CD8-positive, alpha-beta memory T cell (primary cell): ENCODE measurements at regions of chr16 and their contacts with region 1.

Region 1: GRCh38 chr16:22206013-22206841 is at the start of gene EEF2K:
- DNase-seq: peak; percentile 70 to 85 (median 73)
- H3K4me3 ChIP-seq: peak within 1 kb of the TSS; percentile 65
- H3K4me3 Mint-ChIP-seq: peak within 1 kb of the TSS; percentile 86 to 97 (median 94)
- H3K27ac ChIP-seq: peak within 1 kb of the TSS; percentile 63
- H3K27ac Mint-ChIP-seq: peak within 1 kb of the TSS; percentile 40 to 91 (median 84)
- H3K4me1 ChIP-seq: peaks cover 19% of the 10 kb centered on the region
- H3K4me1 Mint-ChIP-seq: peaks cover 24 to 40% (median 32%) of the 10 kb centered on the region in 3 donors
- H3K27me3 ChIP-seq: no peaks in the 10 kb centered on the region
- H3K27me3 Mint-ChIP-seq: no peaks in the 10 kb centered on the region
- total RNA-seq, gene EEF2K: 27.2 to 28.3 TPM

Region 2: DNA sequence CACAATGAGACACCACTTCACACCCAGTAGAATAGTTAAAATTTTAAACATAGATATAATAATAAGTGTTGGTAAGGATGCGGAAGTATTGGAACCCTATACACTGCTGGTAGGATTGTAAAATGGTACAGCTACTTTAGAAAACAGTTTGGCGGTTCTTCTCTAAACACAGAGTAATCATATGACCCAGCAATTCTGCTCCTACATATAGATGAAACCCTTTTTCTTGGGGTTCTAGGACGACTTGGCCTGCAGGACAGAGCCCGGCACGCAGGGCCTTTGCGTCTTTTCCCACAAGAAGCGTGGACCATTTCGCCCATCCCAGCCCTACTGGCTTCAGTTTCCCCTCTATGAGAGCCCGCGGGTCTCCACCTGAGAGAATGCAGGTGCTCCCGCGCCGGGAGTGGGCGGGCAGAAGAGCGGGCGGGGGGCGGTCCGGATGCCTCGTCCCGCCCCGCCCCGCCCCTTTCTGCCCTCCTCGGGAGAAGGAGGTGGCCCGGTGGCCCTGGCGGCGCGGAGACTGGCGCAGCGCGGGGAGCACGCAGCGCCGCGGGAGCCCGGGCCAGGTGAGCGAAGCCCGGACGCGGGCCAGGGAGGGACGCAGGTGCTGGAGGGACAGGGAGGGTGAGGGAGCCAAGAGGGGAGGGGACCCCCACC is 44.1 kb before region 1 on chr16 and contains the start of gene SDR42E2:
- CTCF ChIA-PET with region 1: no interaction called
- POLR2A ChIA-PET with region 1: no interaction called
- DNase-seq: peak; percentile 17 to 56 (median 32)
- H3K4me3 ChIP-seq: peak within 1 kb of the TSS; percentile 39
- H3K4me3 Mint-ChIP-seq: peak within 1 kb of the TSS in 6 of 7 donors; percentile 50 to 68 (median 62)
- H3K27ac ChIP-seq: no peak within 1 kb of the TSS
- H3K27ac Mint-ChIP-seq: peak within 1 kb of the TSS in 2 of 8 donors; percentile 0 to 5
- H3K4me1 ChIP-seq: no peaks in the 10 kb centered on the region
- H3K4me1 Mint-ChIP-seq: peaks cover 11 to 12% (median 11%) of the 10 kb centered on the region in 3 donors
- H3K27me3 ChIP-seq: peaks cover 13% of the 10 kb centered on the region
- H3K27me3 Mint-ChIP-seq: peaks cover 11 to 25% of the 10 kb centered on the region in 2 donors
- total RNA-seq, gene SDR42E2: 0.11 TPM in 1 of 2 experiments, not detected in the other

Region 3: DNA sequence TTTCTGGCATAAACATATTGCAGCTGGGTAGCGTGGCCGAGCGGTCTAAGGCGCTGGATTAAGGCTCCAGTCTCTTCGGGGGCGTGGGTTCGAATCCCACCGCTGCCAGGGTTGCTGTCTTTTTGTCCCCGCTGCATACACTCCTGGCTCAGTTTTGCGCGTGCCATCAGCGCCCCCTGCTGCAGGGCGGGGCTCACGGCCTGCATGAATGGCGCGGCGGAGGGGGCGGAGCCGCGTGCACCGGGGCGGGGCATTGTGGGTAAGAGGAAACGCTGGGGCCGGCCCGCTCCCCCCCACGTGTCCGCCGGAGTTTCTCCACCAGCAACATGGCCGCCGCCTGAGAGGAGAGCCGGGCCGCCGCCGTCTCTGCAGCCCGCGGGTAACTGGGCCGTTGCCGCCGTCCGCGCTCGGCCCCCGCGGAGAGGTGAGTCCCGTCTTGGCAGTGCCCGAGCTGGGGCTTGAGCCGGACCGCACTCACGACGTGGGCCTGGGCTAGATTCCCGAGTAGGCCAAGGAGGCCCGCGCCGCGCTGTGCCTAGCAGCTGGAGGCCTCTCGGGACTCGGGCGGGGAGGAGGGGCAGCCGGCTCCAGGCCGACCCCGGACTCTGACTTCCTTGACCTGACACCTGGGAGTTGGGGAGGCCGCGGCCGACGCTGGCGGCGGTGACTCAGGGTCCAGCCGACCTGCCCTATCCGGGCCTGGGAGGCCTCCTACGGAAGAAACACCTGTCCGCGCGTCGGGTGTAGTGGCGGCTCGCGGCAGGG is 91.1 kb after region 1 on chr16 and contains the start of gene POLR3E:
- CTCF ChIA-PET with region 1: interaction called, 26 read pairs
- POLR2A ChIA-PET with region 1: interaction called, 6 read pairs
- DNase-seq: peak; percentile 100
- H3K4me3 ChIP-seq: peak within 1 kb of the TSS; percentile 81
- H3K4me3 Mint-ChIP-seq: peak within 1 kb of the TSS; percentile 88 to 97 (median 96)
- H3K27ac ChIP-seq: peak within 1 kb of the TSS; percentile 96
- H3K27ac Mint-ChIP-seq: peak within 1 kb of the TSS; percentile 98 to 100 (median 99)
- H3K4me1 ChIP-seq: peaks cover 36% of the 10 kb centered on the region
- H3K4me1 Mint-ChIP-seq: peaks cover 41 to 53% (median 52%) of the 10 kb centered on the region in 3 donors
- H3K27me3 ChIP-seq: no peaks in the 10 kb centered on the region
- H3K27me3 Mint-ChIP-seq: peaks cover 0 to 19% of the 10 kb centered on the region in 2 donors
- total RNA-seq, gene POLR3E: 103 to 116 TPM